Common myeloid progenitor, CD34-positive (primary cell): ENCODE measurements at regions of chr9 and their contacts with region 1.

Region 1: DNA sequence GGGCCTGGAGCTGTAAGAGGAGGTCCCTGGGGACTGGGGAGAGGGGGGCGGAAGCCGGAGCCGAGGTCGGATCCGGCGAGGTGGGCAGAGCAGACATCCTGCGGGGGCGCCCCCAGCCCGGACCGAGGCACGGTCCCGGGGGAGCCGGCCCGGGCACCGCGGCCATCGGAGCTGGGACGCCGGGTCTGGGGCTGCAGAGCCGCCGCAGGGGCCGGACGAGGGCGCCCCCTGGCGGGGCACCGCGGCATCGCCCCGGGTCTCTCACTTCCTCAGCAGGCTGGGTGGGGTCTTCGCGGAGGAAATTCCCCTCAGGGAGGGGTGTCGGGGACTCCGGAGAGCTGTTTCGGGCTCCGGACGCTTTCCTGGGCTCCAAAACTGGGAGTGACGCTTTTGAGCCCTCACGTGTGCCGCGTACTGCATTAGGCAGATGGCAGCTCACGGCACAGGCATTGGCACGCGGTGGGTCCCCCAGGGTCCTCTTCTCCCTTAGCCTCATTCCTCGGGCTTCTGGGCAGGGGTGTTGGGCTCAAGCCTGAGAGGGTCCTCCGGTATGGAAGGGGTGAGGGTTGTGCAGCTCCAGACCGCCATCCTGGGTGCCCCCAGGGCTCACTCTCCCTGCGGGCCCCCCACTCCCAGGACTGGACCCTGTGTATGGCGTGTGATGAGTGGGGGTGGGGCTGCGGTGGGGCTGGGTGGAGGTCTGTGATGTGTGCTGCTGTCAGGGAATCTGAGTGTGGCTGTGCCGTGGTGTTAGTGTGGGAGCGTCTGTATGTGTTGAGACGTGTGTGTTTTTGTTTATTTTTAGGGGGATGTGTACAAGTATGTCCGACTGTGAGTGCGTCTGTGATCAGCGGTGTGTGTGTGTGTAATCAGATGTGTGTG is 29.6 kb downstream of the LHX2 start:
- DNase-seq: peak in 2 of 3 donors; percentile 33 to 45
- H3K4me3 ChIP-seq: peak overlapping the region in 3 of 7 experiments; percentile 32 to 57 (median 34)
- H3K27ac ChIP-seq: no peak overlapping the region
- H3K4me1 ChIP-seq: peaks cover 0 to 15% (median 10%) of the 10 kb centered on the region in 4 experiments
- H3K27me3 ChIP-seq: peaks cover 0 to 99% (median 42%) of the 10 kb centered on the region in 5 experiments

Region 2: GRCh38 chr9:123544007-123544827 is 497.0 kb before region 1 on chr9:
- CTCF ChIA-PET with region 1: interaction called, 56 read pairs
- POLR2A ChIA-PET with region 1: no interaction called
- DNase-seq: peak; percentile 39 to 59 (median 43)
- H3K4me3 ChIP-seq: no peak overlapping the region
- H3K27ac ChIP-seq: no peak overlapping the region
- H3K4me1 ChIP-seq: peaks cover 0 to 5% (median 4%) of the 10 kb centered on the region in 4 experiments
- H3K27me3 ChIP-seq: peaks cover 0 to 3% (median 0%) of the 10 kb centered on the region in 5 experiments

Region 3: GRCh38 chr9:123990427-123990826 is 50.7 kb before region 1 on chr9:
- CTCF ChIA-PET with region 1: no interaction called
- POLR2A ChIA-PET with region 1: no interaction called
- DNase-seq: no peak
- H3K4me3 ChIP-seq: no peak overlapping the region
- H3K27ac ChIP-seq: no peak overlapping the region
- H3K4me1 ChIP-seq: no peaks in the 10 kb centered on the region
- H3K27me3 ChIP-seq: peaks cover 5 to 60% (median 18%) of the 10 kb centered on the region in 5 experiments

Region 4: GRCh38 chr9:124088476-124088837 is 47.3 kb after region 1 on chr9:
- CTCF ChIA-PET with region 1: no interaction called
- POLR2A ChIA-PET with region 1: no interaction called
- DNase-seq: no peak
- H3K4me3 ChIP-seq: no peak overlapping the region
- H3K27ac ChIP-seq: no peak overlapping the region
- H3K4me1 ChIP-seq: no peaks in the 10 kb centered on the region
- H3K27me3 ChIP-seq: peaks cover 0 to 46% (median 9%) of the 10 kb centered on the region in 5 experiments

Region 5: DNA sequence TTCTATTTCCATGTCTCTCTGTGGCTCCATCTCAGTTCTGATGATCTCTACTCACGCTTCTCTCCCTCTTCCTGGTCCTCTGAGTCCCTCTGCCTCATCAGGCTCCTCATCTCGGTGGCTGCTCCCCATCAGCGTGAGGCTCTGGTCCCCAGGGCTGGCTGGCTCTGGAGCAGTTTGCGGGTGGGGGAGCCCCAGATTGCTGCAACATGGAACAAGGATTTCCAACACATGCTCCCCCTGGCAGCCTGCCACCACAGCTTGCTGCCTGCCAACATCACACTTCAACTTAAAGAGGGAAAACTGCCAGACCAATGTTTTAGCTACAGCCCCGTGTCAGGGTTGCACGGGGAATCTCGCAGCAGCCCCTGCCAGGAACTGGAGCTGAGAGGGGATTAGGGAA is 139.4 kb after region 1 on chr9:
- CTCF ChIA-PET with region 1: no interaction called
- POLR2A ChIA-PET with region 1: no interaction called
- DNase-seq: peak; percentile 6 to 42 (median 39)
- H3K4me3 ChIP-seq: no peak overlapping the region
- H3K27ac ChIP-seq: no peak overlapping the region
- H3K4me1 ChIP-seq: peaks cover 0 to 7% (median 0%) of the 10 kb centered on the region in 4 experiments
- H3K27me3 ChIP-seq: peaks cover 0 to 5% (median 4%) of the 10 kb centered on the region in 5 experiments

Region 6: DNA sequence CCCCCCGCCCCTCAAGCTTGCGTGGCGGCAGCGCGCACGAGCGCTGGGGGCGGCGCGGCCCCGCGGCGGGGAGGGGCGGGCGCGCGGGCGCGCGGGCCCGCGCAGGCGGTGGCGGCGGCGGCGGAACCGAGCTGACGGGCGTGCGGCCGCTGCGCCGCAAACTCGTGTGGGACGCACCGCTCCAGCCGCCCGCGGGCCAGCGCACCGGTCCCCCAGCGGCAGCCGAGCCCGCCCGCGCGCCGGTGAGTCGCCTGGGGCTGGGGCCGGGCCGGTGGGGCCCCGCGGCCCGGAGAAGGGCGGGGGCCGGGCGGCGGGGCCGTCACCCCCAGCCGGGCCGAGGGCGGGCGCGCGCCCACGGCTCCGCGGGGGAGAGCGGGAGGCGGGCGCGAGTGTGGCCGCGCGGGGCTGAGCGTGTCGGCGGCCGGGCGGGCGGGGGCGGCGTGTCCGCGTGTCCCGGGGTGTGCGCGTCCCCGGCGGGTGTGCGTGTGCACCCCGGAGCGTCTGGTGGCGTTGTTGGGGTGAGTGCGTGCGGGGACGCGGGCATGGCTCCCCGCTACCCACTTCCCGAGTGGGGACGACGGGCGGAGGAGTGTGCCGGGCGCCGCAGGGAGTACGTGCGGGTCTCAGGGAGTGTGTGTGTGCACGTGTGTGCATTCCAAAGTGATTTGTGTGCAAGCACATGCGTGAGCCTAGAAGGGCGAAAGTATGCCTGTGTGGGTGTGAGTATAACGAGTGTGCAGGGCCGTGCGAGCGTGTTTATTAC is 216.8 kb after region 1 on chr9 and contains the start of gene NEK6:
- CTCF ChIA-PET with region 1: no interaction called
- POLR2A ChIA-PET with region 1: no interaction called
- DNase-seq: peak in 2 of 3 donors; percentile 46 to 65
- H3K4me3 ChIP-seq: peak within 1 kb of the TSS; percentile 56 to 95 (median 80)
- H3K27ac ChIP-seq: peak within 1 kb of the TSS in 1 of 2 experiments; percentile 54
- H3K4me1 ChIP-seq: peaks cover 16 to 63% (median 47%) of the 10 kb centered on the region in 4 experiments
- H3K27me3 ChIP-seq: no peaks in the 10 kb centered on the region